Activated B cell treated with CpG ODN at 0.5 μM for 24 hours (primary cell): ENCODE measurements at regions of chr4 and their contacts with region 1.

Region 1: DNA sequence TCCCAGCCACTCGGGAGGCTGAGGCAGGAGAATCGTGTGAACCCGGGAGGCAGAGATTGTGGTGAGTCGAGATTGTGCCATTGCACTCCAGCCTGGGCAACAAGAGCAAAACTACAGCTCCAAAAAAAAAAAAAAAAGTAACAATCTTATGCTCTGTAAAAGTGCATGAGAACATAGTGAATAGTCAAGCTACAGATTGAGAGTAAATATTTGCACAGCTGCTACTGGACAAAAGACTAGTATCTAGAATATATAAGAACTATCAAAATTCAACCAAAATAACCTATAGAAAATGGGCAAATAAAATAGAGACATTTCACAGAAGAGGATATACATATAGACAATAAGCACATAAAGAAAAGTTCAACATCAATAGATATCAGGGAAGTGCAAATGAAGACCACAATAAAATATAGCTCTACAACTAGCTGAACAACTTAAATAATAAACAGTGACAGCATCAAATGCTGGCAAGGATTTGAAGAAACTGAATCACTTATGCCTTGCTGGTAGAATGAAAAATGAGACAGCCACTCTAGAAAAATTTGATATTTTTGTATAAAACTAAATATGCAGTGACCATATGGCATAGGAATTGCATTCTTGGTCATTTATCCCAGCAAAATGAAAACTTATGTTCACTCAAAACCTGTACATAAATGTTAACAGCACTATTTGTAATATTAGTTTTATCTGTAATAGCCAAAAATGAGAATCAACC is 1101.8 kb downstream of the C4orf33 start:
- DNase-seq: no peak
- ATAC-seq: no peak
- H3K4me3 Mint-ChIP-seq: no peak overlapping the region
- H3K27ac Mint-ChIP-seq: no peak overlapping the region
- H3K4me1 Mint-ChIP-seq: no peaks in the 10 kb centered on the region
- H3K27me3 Mint-ChIP-seq: no peaks in the 10 kb centered on the region
- CTCF ChIP-seq: no peak

Region 2: GRCh38 chr4:130125467-130125866 is 72.3 kb before region 1 on chr4:
- CTCF ChIA-PET with region 1: no interaction called
- POLR2A ChIA-PET with region 1: no interaction called
- intact Hi-C with region 1: loop called (anchors 2 kb)
- DNase-seq: no peak
- ATAC-seq: no peak
- H3K4me3 Mint-ChIP-seq: no peak overlapping the region
- H3K27ac Mint-ChIP-seq: no peak overlapping the region
- H3K4me1 Mint-ChIP-seq: no peaks in the 10 kb centered on the region
- H3K27me3 Mint-ChIP-seq: no peaks in the 10 kb centered on the region
- CTCF ChIP-seq: no peak